GM12878 (cell line): ENCODE measurements at regions of chr14 and their contacts with region 1.

Region 1: DNA sequence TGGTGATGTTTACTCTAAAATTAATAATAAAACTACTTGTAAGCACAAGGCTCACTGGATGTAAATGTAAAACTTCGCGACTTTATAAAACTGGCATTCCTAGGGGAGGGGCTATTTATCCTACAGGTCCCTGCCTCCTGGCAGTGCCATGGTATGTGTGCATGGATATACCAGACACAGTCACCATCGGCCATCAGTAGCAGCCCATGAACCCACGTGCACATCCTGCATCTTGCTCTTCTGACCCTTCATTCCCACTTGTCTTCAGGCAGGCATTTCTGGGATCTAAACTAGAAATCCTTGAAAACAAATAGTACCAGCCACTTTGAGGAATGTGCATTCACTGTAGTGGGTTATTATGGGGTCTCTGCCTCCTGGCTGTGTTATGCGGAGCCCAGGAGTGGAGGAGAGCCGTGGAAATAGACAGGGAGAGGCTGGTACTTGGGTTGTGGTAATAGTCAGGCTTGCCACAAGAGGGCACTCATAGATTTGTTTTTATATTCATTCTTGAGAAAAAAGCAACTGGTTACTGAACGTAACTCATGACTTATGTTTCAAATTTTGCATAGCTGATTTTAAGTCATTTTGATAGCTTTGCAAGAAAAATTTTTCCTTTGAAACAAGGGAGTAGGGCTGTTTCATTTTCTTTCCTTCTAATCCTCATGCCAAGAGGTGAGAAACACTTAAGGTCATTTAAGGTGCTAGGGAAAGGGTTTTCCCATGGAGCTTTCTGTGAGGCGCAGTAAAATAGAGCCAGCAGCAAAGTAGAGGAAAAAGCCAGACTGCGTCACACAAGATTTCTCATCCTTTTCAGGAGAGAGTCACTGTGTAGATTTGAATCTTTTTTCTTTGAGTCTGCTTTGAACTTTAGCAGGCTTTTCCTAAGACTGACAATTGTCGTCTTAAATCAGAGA is 17.4 kb upstream of the GALNT16 start:
- DNase-seq: peak; percentile 13
- ATAC-seq: peak; percentile 89
- H3K4me3 ChIP-seq: no peak overlapping the region
- H3K27ac ChIP-seq: no peak overlapping the region
- H3K4me1 ChIP-seq: no peaks in the 10 kb centered on the region
- H3K27me3 ChIP-seq: no peaks in the 10 kb centered on the region
- CTCF ChIP-seq: peak; percentile 62 to 77 (median 69)
- EP300 ChIP-seq: no peak
- POLR2A ChIP-seq: no peak
- RAD21 ChIP-seq: peak; percentile 69

Region 2: DNA sequence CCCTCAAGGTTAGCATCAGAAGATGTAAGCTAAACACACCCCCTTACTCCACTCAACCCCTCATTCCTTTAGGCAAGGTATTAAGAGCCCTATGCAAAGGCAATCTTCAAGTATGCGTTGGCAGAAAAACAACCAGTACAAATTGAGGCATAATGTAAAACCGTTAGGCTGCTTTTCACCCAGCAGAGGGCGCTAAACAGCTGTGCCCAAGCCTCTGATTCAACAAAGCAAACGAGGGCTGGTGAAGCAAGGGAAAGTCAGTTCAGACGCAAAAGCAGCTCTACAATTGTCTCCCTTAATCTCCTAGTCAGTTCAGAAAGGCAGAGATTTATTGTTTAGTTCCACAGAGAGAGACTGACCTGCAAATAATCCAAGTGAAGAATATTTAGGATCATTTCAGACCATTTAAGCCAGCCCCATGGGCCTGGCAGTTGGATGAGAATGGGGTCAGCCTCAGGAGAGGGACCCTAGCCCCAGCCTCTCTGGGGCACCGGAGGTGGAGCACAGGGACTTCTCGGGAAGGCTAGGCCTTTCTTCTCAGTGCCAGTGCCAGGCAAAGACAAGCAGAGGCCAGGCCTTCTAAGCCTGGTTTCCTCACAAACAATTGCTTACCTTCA is 113.2 kb before region 1 on chr14:
- CTCF ChIA-PET with region 1: interaction called, 46 read pairs
- POLR2A ChIA-PET with region 1: no interaction called
- RAD21 ChIA-PET with region 1: interaction called, 18 read pairs
- SMC1A ChIA-PET with region 1: interaction called, 16 read pairs
- in situ Hi-C with region 1: no loop called
- intact Hi-C with region 1: loop called (anchors 1 kb)
- DNase-seq: no peak
- ATAC-seq: peak; percentile 97
- H3K4me3 ChIP-seq: no peak overlapping the region
- H3K27ac ChIP-seq: no peak overlapping the region
- H3K4me1 ChIP-seq: peaks cover 8% of the 10 kb centered on the region; the same call in 1 of the 2 replicates
- H3K27me3 ChIP-seq: no peaks in the 10 kb centered on the region
- CTCF ChIP-seq: peak; percentile 91 to 98 (median 93)
- EP300 ChIP-seq: no peak
- POLR2A ChIP-seq: no peak
- RAD21 ChIP-seq: peak; percentile 92

Region 3: DNA sequence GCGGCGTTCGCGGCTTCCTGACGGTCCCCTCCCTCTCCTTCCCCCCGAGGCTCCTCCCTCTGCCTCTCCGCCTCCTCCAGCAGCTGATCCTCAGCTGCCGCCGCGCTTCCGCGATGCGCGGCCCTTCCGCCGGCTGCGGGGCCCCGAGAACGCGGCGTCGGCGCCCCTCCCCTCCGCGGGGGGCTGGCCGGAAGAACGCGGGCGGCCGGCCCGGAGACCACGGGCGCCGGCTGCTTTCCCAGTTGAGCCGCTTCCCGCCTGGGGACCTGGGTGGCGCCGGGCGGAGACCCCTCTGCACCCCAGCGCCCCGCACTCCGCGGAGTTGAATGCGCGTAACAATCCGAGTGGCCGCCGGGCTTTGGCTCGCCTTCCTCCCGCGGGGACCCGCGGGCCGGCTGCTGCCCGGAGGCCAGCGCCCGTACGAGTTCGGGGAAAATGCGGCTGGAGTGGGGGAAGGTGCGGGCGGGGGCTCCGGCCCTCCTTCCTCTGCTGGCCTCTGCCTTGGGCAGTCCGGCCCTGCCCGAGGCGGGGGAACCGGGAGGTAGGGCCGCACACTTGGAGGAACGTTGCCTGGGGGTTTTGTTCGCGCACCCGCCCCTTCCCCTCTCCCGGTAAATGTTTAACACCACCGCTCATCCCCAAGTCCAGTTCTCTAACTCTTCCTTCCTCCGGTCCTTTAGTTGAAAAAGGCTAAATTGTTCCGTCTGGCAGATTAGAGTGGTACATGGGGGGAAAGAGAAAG is 89.3 kb before region 1 on chr14:
- CTCF ChIA-PET with region 1: interaction called, 16 read pairs
- POLR2A ChIA-PET with region 1: no interaction called
- RAD21 ChIA-PET with region 1: no interaction called
- SMC1A ChIA-PET with region 1: no interaction called
- in situ Hi-C with region 1: no loop called
- intact Hi-C with region 1: no loop called
- DNase-seq: peak; percentile 71
- ATAC-seq: peak; percentile 93
- H3K4me3 ChIP-seq: peak overlapping the region; percentile 96
- H3K27ac ChIP-seq: peak overlapping the region; percentile 48; the same call in 1 of the 2 replicates
- H3K4me1 ChIP-seq: peaks cover 8% of the 10 kb centered on the region; the same call in 1 of the 2 replicates
- H3K27me3 ChIP-seq: peaks cover 1 to 5% of the 10 kb centered on the region in 2 experiments; a peak in 1 of 4 replicates
- CTCF ChIP-seq: no peak
- EP300 ChIP-seq: no peak
- POLR2A ChIP-seq: peak; percentile 86
- RAD21 ChIP-seq: no peak

Region 4: DNA sequence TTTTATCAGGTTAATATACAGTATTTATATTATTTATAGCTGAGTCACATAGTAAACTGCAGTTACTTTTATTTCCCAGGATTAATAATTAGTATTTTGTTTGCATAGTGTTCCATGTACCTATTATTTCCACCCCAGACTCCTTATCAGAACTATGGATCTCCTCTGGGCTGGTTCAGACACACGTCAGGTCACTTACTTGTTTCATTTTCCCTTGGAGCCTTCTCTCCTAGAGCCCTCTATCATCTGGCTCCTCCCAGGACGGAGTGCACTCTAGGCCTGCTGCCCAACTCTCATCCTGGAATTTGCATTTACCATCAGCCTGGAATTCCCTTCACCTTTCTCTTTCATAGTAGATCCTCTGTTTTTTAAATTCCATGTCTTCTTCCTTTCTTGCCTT is 11.1 kb before region 1 on chr14:
- CTCF ChIA-PET with region 1: interaction called, 12 read pairs
- POLR2A ChIA-PET with region 1: interaction called, 3 read pairs
- RAD21 ChIA-PET with region 1: interaction called, 5 read pairs
- SMC1A ChIA-PET with region 1: interaction called, 4 read pairs
- in situ Hi-C with region 1: no loop called
- intact Hi-C with region 1: no loop called
- DNase-seq: no peak
- ATAC-seq: no peak
- H3K4me3 ChIP-seq: no peak overlapping the region
- H3K27ac ChIP-seq: no peak overlapping the region
- H3K4me1 ChIP-seq: no peaks in the 10 kb centered on the region
- H3K27me3 ChIP-seq: no peaks in the 10 kb centered on the region
- CTCF ChIP-seq: no peak
- EP300 ChIP-seq: no peak
- POLR2A ChIP-seq: no peak
- RAD21 ChIP-seq: no peak

Region 5: DNA sequence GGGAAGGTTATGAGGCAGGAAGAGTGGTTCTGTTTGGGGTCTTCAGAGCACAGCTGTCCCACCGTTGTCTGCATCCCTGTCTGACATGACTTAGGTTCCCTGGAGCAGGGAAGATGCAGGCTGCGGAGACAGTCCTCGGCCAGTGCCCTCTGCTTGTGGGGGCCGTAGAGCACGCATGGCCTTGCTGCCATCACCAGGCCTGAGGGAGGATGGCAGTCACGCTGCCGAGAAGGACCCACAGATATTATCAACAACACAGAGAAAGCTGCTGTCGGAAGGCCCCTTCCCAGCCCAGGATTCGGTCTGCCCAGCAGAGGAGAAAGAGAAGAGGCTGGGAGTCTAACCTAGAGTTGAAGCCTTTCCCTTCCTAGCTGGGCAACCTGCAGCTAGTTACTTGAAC is 120.5 kb after region 1 on chr14:
- CTCF ChIA-PET with region 1: interaction called, 23 read pairs
- POLR2A ChIA-PET with region 1: no interaction called
- RAD21 ChIA-PET with region 1: interaction called, 12 read pairs
- SMC1A ChIA-PET with region 1: interaction called, 5 read pairs
- in situ Hi-C with region 1: no loop called
- intact Hi-C with region 1: loop called (anchors 5 kb)
- DNase-seq: no peak
- ATAC-seq: no peak
- H3K4me3 ChIP-seq: no peak overlapping the region
- H3K27ac ChIP-seq: no peak overlapping the region
- H3K4me1 ChIP-seq: peaks cover 13% of the 10 kb centered on the region
- H3K27me3 ChIP-seq: no peaks in the 10 kb centered on the region
- CTCF ChIP-seq: peak in 2 of 3 experiments; percentile 18 to 19; a peak in 1 of 6 replicates
- EP300 ChIP-seq: no peak
- POLR2A ChIP-seq: no peak
- RAD21 ChIP-seq: peak; percentile 50

Region 6: DNA sequence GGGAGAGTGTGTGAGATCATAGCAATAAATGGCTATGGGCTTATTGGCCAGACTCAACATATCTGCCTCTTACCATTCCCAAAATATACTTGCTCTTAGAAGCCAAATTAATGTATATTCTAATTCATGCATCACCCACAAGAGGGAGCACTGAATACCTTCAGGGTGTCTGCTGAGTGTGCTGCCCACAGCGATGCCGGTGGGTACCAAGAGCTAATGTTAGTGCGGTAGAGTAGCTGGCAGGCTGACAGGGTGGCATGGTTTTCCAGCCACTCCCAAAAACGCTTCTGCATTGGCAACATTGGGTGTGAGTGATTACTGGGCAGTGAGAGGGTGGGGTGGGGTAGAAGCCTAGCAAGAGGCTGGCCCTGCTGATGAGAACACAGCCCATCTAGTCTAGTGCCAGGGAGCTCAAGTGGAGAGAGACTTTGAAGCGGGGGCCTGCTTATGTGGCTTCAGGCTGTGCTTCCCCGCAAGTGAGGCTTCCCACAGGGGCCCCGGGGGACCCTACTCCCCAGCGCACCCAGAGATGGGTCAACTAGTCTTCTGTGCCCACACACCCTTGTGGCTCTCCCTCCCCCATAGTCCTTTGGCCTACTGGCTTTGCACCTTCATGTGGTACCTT is 232.7 kb after region 1 on chr14:
- CTCF ChIA-PET with region 1: interaction called, 26 read pairs
- POLR2A ChIA-PET with region 1: no interaction called
- RAD21 ChIA-PET with region 1: no interaction called
- SMC1A ChIA-PET with region 1: interaction called, 21 read pairs
- in situ Hi-C with region 1: no loop called
- intact Hi-C with region 1: no loop called
- DNase-seq: no peak
- ATAC-seq: peak; percentile 84
- H3K4me3 ChIP-seq: no peak overlapping the region
- H3K27ac ChIP-seq: no peak overlapping the region
- H3K4me1 ChIP-seq: no peaks in the 10 kb centered on the region
- H3K27me3 ChIP-seq: no peaks in the 10 kb centered on the region
- CTCF ChIP-seq: peak; percentile 51 to 57 (median 55)
- EP300 ChIP-seq: no peak
- POLR2A ChIP-seq: no peak
- RAD21 ChIP-seq: peak; percentile 34; the same call in 1 of the 2 replicates

Region 7: GRCh38 chr14:69574263-69574953 is 331.8 kb after region 1 on chr14 and contains the start of gene CCDC177:
- CTCF ChIA-PET with region 1: interaction called, 20 read pairs
- POLR2A ChIA-PET with region 1: no interaction called
- RAD21 ChIA-PET with region 1: interaction called, 5 read pairs
- SMC1A ChIA-PET with region 1: interaction called, 6 read pairs
- in situ Hi-C with region 1: no loop called
- intact Hi-C with region 1: loop called (anchors 2 kb)
- DNase-seq: no peak
- ATAC-seq: peak; percentile 93
- H3K4me3 ChIP-seq: no peak within 1 kb of the TSS
- H3K27ac ChIP-seq: no peak within 1 kb of the TSS
- H3K4me1 ChIP-seq: no peaks in the 10 kb centered on the region
- H3K27me3 ChIP-seq: peaks cover 13 to 16% of the 10 kb centered on the region in 2 experiments
- CTCF ChIP-seq: peak; percentile 77 to 88 (median 87)
- EP300 ChIP-seq: no peak
- POLR2A ChIP-seq: no peak
- RAD21 ChIP-seq: peak; percentile 70
- polyA plus RNA-seq, gene CCDC177: not detected